ENCODE measurements at regions of chr11 and their contacts with region 1.

Region 1: DNA sequence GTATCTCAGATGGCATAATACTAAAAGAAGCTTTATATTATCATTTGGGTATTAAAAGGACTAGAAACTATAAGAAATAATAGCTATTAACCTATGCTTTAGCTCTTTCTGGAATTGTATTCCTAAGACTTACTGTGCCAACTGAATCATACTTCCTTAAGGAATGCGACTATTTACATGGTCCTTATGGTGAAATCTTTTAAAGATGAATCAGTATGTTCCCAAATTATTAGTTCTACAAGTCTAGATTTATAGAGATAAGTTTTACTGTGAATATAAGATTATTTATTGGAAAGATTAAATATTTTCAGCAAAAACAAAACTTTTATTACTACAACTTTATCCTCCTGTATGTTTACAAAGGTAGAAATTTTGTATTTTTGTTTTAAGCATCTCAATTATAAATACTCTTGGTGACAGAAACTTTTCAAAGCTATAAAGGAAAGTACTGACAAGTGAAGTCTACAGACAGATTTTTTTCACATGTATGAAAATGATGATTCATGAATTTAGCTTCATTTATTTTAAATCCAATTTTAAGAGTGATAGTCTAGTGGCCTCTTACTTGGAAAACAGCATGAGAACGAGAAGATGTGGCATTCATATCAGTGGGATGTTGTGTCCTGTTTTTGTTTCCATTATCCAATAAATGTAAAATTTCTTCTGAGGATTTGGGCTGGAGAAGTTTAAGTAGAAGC is 17.8 kb downstream of the KIF18A start:
- DNase-seq: peak; percentile 50
- H3K4me3 ChIP-seq: no peak overlapping the region
- H3K27ac ChIP-seq: peak overlapping the region; percentile 74
- H3K4me1 ChIP-seq: peaks cover 34% of the 10 kb centered on the region
- H3K27me3 ChIP-seq: no peaks in the 10 kb centered on the region
- CTCF ChIP-seq: no peak
- POLR2A ChIP-seq: no peak

Region 2: GRCh38 chr11:28017816-28018215 is 72.4 kb before region 1 on chr11:
- CTCF ChIA-PET with region 1: no interaction called
- POLR2A ChIA-PET with region 1: no interaction called
- dilution Hi-C with region 1: no loop called
- intact Hi-C with region 1: no loop called
- DNase-seq: no peak
- H3K4me3 ChIP-seq: no peak overlapping the region
- H3K27ac ChIP-seq: no peak overlapping the region
- H3K4me1 ChIP-seq: no peaks in the 10 kb centered on the region
- H3K27me3 ChIP-seq: no peaks in the 10 kb centered on the region
- CTCF ChIP-seq: no peak
- POLR2A ChIP-seq: no peak

Region 3: GRCh38 chr11:28077521-28077920 is 12.7 kb before region 1 on chr11:
- CTCF ChIA-PET with region 1: interaction called, 10 read pairs
- POLR2A ChIA-PET with region 1: no interaction called
- dilution Hi-C with region 1: no loop called
- intact Hi-C with region 1: no loop called
- DNase-seq: no peak
- H3K4me3 ChIP-seq: no peak overlapping the region
- H3K27ac ChIP-seq: no peak overlapping the region
- H3K4me1 ChIP-seq: peaks cover under 1% of the 10 kb centered on the region
- H3K27me3 ChIP-seq: no peaks in the 10 kb centered on the region
- CTCF ChIP-seq: no peak
- POLR2A ChIP-seq: no peak

Region 4: DNA sequence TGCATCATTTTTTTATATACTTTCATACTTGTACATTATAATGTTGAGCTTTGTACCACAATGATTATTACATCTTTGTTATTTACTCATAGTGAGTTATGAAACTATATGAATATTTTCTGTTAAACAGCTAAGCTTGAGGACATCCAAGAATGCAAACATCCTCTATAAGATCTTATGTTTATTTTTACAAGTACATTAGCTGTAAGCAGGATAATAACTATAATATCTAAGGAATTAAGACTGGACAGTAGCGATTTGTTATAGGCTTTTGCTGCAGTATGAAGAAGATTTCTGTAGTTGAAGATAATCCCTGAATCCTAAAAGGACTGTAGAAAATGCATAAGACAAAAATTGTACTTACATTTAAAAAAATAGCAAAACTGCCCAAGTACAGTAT is 194.0 kb after region 1 on chr11:
- CTCF ChIA-PET with region 1: no interaction called
- POLR2A ChIA-PET with region 1: no interaction called
- dilution Hi-C with region 1: no loop called
- intact Hi-C with region 1: no loop called
- DNase-seq: no peak
- H3K4me3 ChIP-seq: no peak overlapping the region
- H3K27ac ChIP-seq: no peak overlapping the region
- H3K4me1 ChIP-seq: no peaks in the 10 kb centered on the region
- H3K27me3 ChIP-seq: no peaks in the 10 kb centered on the region
- CTCF ChIP-seq: no peak
- POLR2A ChIP-seq: no peak